Sigmoid colon (tissue), 7 donors: ENCODE measurements at regions of chr19 and their contacts with region 1.

Region 1: DNA sequence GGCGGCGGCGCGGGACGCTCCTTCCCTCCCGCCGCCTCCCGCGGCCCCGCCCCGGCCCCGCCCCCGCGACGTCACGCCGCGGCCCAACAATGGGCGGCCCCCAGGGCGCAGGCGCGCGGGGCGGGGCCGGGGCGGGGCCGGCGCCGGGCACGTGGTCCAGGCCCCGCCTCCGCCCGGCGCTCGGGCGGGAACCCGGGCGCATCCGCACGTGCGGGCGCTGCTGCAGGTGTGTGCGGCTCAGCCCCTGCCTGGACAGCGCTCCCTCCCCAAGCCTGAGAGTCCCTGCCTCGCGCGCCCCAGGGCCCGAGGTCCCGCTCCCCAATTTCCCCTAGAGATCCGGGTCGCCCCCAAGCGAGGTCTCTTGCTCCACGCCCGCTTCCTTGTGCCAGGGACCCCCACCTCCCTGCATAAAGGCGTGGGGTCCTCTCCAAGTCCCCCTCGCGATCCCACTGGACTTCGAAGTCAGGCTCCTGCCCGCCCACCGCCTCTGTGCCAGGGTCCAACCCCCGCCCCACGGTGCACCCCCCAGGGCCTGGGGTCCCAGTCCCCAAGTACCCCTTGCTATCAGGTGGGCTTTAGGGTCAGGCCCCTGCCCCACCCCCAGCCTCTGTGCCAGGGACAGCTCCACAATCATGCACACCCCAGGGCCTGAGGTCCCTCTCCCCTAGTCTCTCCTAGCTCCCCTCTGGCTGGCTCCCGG is at the start of gene MEX3D:
- DNase-seq: peak; percentile 89
- H3K4me3 ChIP-seq: peak within 1 kb of the TSS; percentile 46 to 78 (median 72)
- H3K27ac ChIP-seq: peak within 1 kb of the TSS; percentile 88 to 91 (median 91)
- H3K4me1 ChIP-seq: peaks cover 0 to 27% (median 15%) of the 10 kb centered on the region in 4 donors
- H3K27me3 ChIP-seq: no peaks in the 10 kb centered on the region
- CTCF ChIP-seq: no peak
- EP300 ChIP-seq: no peak
- POLR2A ChIP-seq: no peak
- total RNA-seq, gene MEX3D: 7.4 to 16.1 (median 12.9) TPM

Region 2: DNA sequence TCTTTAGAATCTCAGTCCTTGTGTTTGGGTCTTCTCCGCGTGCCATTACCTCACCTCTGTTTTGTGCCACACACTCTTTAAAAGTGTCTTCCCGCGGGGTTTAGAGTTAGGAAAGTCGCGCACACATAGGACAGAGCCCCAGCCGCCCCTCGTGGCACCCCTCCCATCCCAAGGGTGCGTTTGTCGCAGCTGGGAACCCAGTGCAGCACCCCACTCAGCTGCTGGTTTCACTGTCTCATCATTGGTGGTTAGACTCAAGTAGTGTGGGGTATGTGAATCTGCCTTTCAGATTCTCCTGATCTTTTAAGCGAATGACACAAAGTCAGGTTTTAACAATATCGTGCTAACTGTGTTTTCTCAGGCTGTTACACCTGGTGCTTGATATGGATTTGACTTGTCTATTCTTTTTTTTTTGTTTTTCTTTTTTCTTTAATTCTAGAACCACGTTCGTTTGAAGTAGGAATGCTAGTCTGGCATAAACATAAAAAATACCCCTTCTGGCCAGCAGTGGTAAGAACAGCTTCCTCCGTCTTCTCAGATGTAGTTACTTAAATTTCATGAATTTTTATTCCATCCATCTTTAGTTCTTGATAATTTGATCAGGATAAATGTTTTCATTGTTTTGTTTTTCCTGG is 204.3 kb before region 1 on chr19:
- intact Hi-C with region 1: no loop called
- DNase-seq: no peak
- H3K4me3 ChIP-seq: no peak overlapping the region
- H3K27ac ChIP-seq: no peak overlapping the region
- H3K4me1 ChIP-seq: peaks cover 0 to 34% (median 25%) of the 10 kb centered on the region in 4 donors
- H3K27me3 ChIP-seq: no peaks in the 10 kb centered on the region
- CTCF ChIP-seq: no peak
- EP300 ChIP-seq: no peak
- POLR2A ChIP-seq: no peak

Region 3: DNA sequence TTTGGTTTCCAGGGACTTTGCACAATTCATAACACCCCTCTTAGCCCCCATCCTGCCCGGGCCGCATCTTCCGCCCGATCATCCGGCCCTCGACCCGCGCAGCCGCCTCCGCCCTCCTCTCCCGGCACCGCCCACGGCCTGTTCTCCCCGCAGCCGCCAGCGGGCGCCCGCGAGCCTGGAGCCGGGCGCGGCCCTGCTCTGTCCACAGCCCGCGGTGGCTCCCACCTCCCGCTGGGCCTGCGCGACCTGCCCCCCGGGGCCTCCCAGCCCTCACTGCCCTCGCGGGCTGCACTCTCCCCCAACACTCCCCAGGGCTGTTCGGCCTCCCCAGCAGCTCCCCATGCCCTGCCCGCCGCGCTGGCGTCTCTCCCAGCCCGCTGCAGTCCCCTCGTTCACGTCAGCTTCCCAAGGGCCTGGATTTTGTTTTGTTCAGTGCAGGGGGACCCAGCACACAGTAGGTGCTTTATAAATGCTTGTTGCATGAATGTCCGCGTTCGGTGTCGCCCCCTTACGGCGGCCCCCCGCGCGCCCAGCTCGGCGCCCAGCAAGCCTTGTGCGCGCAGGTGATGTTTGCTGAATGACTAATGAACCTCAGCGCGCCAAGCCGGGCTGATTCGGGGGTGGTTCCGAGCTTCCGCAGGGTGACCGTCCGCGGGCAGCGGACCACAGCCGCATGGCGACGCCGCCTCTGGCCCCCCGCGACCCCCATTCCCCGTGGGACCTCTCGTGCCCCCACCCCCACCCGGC is 123.1 kb before region 1 on chr19:
- intact Hi-C with region 1: no loop called
- DNase-seq: no peak
- H3K4me3 ChIP-seq: peak overlapping the region in 3 of 4 donors; percentile 33 to 43 (median 43)
- H3K27ac ChIP-seq: peak overlapping the region in 2 of 4 donors; percentile 7 to 22
- H3K4me1 ChIP-seq: peaks cover 0 to 41% (median 33%) of the 10 kb centered on the region in 4 donors
- H3K27me3 ChIP-seq: peaks cover 44 to 54% (median 51%) of the 10 kb centered on the region in 3 donors
- CTCF ChIP-seq: peak; percentile 29 to 98 (median 65)
- EP300 ChIP-seq: no peak
- POLR2A ChIP-seq: no peak

Region 4: DNA sequence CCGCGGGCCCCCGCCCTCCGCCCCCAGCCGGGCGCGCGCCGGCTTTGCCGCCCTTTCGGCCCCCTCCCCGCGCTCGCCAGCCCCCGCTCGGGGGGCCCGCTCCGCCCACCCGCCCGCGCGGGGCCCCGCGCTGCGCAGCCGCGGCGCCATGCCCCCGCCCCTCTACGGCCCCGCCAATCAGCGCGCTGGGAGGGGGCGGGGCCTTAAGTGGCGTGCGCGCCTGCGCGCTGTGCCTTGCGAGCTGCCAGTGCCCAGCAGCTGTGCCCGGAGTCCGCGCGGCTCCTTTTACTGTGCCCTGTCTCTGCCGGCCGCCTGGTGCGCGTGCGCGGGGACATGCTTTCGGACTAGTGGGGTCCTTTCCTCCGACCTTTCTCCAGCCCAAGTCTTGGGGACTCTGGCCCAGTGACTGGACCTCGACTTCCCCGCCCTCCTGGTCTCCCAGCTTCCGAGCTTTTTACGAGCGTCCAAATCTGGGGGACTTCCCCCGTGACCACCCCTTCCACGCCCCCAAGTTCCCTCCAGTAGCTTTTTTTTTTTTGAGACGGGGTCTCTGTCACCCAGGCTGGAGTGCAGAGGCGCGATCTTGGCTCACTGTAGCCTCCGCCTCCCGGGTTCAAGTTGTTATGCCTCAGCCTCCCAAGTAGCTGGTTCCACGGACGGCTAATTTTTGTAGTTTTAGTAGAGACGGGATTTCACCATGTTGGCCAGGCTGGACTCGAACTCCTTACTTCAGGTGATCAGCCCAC is 24.5 kb after region 1 on chr19 and contains the start of gene MBD3:
- intact Hi-C with region 1: loop called (anchors 2 kb)
- DNase-seq: peak; percentile 96
- H3K4me3 ChIP-seq: peak within 1 kb of the TSS; percentile 46 to 83 (median 79)
- H3K27ac ChIP-seq: peak within 1 kb of the TSS; percentile 89 to 99 (median 94)
- H3K4me1 ChIP-seq: peaks cover 0 to 34% (median 26%) of the 10 kb centered on the region in 4 donors
- H3K27me3 ChIP-seq: no peaks in the 10 kb centered on the region
- CTCF ChIP-seq: no peak
- EP300 ChIP-seq: no peak
- POLR2A ChIP-seq: peak in 1 of 2 donors; percentile 16
- total RNA-seq, gene MBD3: 52.3 to 88.6 (median 71.3) TPM

Region 5: GRCh38 chr19:1605236-1606137 is 37.0 kb after region 1 on chr19 and contains the start of gene UQCR11:
- intact Hi-C with region 1: loop called (anchors 5 kb)
- DNase-seq: peak; percentile 98
- H3K4me3 ChIP-seq: peak within 1 kb of the TSS; percentile 87 to 98 (median 95)
- H3K27ac ChIP-seq: peak within 1 kb of the TSS; percentile 90 to 96 (median 94)
- H3K4me1 ChIP-seq: peaks cover 0 to 39% (median 36%) of the 10 kb centered on the region in 4 donors
- H3K27me3 ChIP-seq: no peaks in the 10 kb centered on the region
- CTCF ChIP-seq: peak; percentile 61 to 77 (median 66)
- EP300 ChIP-seq: no peak
- POLR2A ChIP-seq: peak in 1 of 2 donors; percentile 20
- total RNA-seq, gene UQCR11: 81.1 to 176 (median 122) TPM